AG04449 (cell line): ENCODE measurements at regions of chr22 and their contacts with region 1.

Region 1: GRCh38 chr22:19730655-19731360 is 7.5 kb downstream of the GP1BB start:
- DNase-seq: no peak
- H3K4me3 ChIP-seq: peak overlapping the region; percentile 61
- CTCF ChIP-seq: peak; percentile 99

Region 2: GRCh38 chr22:19745155-19746101 is 14.6 kb after region 1 on chr22:
- CTCF ChIA-PET with region 1: interaction called, 70 read pairs
- POLR2A ChIA-PET with region 1: no interaction called
- DNase-seq: no peak
- H3K4me3 ChIP-seq: no peak overlapping the region
- CTCF ChIP-seq: no peak

Region 3: DNA sequence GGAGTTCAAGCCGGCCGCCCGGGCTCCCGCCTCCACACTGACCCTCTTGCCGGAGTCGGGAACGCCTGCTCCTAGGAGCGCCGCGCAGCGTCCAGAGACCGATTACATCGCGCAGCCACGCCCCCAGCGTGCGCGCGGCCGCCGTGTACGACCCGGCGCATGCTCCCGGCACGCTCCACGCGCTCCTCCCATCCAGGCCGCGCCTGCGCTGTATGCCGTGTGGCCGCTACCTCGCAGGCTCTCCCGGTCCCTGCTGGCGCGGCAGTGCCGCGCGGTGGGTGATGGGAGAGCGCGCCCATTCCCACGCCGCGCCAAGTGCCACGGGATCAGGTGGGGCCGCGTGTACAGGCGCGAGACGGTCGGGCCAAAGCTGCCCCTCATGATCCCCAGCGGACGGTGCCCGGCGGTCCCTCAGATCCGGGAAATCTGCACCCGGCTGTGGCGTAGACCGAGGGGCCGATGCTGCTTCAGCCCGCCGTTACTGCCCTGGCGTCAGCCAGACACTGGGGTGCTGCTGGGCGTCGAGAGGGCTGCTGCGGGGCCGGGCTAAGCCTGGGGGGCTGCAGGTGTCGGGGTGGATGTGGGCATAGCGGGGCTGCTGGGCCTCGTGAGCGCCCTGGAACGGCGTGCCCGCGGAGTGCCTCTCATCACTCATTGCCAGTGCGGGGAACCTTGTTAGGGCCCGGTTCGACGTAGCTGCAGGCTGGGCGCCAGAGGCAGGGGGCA is 124.1 kb after region 1 on chr22 and contains the starts of genes GNB1L and RTL10:
- CTCF ChIA-PET with region 1: interaction called, 10 read pairs
- POLR2A ChIA-PET with region 1: interaction called, 3 read pairs
- DNase-seq: peak; percentile 51
- H3K4me3 ChIP-seq: peak within 1 kb of the TSS; percentile 82
- CTCF ChIP-seq: peak; percentile 41

Region 4: DNA sequence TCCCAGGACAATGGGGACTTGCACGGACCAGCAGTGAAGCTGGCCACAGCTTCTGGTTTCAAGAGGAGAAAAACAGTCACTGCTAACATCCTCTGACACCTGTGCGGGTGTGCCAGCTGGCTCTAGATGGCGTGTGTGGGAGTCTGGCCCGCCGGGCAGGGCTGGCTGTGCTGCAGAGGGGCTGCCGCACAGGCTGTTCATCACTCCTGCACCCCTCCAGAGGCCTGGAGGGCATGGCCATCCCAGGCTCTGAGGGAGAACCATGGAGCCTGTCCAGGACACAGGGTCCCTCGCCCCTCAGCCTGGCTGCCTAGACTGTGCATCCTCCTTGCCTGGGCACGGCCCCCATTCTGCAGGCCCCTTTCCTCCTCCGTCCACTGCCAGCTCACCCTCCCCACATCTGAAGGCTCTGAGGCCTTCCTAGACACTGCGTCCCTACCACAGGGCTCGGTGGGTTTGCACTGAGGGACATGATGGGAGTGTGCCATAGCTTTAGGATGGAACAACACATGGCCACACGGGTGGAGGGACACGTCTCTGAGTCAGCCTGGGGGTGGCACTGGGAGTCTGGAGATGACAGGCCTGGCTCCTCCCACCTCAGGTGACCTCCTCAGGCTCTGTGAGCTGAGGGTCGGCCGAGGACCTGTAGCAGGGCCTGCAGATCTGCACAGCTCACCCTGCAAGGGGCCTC is 166.0 kb after region 1 on chr22:
- CTCF ChIA-PET with region 1: interaction called, 125 read pairs
- POLR2A ChIA-PET with region 1: no interaction called
- DNase-seq: no peak
- H3K4me3 ChIP-seq: no peak overlapping the region
- CTCF ChIP-seq: no peak

Region 5: DNA sequence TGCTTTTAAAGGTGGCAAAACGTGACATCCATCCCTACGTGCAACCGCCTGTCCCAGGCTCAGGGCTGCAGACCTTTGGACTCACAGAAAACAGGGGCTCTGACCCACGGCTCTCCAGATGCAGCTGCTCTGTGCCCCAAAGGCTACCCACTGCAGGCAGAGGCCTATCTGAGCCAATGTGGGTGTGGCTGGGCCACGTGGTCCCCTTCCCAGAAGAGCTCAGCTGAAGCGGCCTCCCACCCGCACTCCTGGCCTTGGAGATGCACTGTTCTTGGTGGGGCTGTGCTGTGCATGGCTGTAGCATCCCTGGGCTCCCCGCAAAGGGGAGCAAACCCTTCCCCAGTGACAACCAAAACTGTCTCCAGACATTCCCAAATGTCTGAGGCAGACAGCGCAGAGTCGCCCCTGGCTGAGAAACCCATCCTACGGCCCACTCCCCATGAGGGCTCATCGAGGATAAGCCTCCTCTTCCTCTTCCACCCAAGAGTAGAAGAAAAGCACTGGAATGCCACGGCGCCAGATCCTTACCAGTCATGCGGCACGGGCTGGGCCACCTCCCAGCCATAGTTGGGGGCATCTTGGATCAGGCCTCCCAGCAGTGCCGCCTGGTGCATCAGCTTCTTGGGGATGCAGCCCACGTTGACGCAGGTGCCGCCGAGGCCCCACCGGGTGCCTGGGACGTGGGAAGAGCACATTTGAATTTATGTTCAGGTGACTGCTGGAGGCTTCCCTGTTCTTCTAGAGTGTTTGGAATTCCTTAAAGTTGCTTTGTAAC is 187.7 kb after region 1 on chr22:
- CTCF ChIA-PET with region 1: interaction called, 444 read pairs
- POLR2A ChIA-PET with region 1: no interaction called
- DNase-seq: no peak
- H3K4me3 ChIP-seq: no peak overlapping the region
- CTCF ChIP-seq: no peak

Region 6: GRCh38 chr22:20013382-20013871 is 282.6 kb after region 1 on chr22:
- CTCF ChIA-PET with region 1: interaction called, 41 read pairs
- POLR2A ChIA-PET with region 1: no interaction called
- DNase-seq: no peak
- H3K4me3 ChIP-seq: no peak overlapping the region
- CTCF ChIP-seq: peak; percentile 90